ENCODE measurements at regions of chrX and their contacts with region 1.

Region 1: DNA sequence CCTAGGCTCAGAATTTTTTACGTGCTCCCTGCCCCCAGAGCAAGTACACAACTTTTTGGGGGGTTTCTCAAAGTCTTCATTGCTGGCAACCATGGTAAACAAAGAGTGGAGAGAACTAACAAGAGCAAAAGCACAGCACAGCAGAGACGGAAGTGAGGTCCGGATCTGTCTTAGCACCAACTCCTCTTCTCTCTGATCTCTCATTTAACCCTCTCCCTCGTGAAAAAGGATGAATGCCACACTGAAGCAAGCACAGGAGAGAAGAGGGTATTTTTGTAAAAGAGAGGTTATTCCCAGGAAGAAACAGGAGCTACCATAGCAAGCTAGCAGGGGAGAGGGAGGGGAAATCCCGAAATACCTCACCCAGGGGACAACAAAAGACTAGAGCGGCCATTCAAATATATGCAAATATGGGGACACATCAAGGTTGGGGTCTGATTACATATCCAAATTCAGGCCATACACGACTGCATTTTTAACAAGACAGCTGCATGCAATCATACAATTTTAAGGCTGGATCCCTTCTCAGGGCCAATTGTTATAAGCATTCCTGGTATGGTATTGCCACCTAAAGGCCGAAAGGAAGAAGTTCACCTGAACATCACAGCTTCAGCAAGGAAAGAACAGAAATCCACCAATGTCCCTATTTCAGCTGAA is 46.6 kb downstream of the CD40LG start:
- DNase-seq: peak; percentile 17
- ATAC-seq: peak; percentile 70
- H3K4me3 Mint-ChIP-seq: peak overlapping the region; percentile 60
- H3K27ac Mint-ChIP-seq: peak overlapping the region; percentile 94
- H3K4me1 Mint-ChIP-seq: peaks cover 73% of the 10 kb centered on the region
- H3K27me3 Mint-ChIP-seq: no peaks in the 10 kb centered on the region
- CTCF ChIP-seq: peak; percentile 76

Region 2: GRCh38 chrX:136496770-136497598 is 197.6 kb before region 1 on chrX and contains the start of gene HTATSF1:
- CTCF ChIA-PET with region 1: no interaction called
- POLR2A ChIA-PET with region 1: no interaction called
- intact Hi-C with region 1: loop called (anchors 10 kb)
- DNase-seq: peak; percentile 93
- ATAC-seq: peak; percentile 81
- H3K4me3 Mint-ChIP-seq: peak within 1 kb of the TSS; percentile 95
- H3K27ac Mint-ChIP-seq: peak within 1 kb of the TSS; percentile 95
- H3K4me1 Mint-ChIP-seq: peaks cover 10% of the 10 kb centered on the region
- H3K27me3 Mint-ChIP-seq: no peaks in the 10 kb centered on the region
- CTCF ChIP-seq: no peak
- total RNA-seq, gene HTATSF1: 33.0 to 35.4 TPM

Region 3: GRCh38 chrX:136577552-136577951 is 117.0 kb before region 1 on chrX:
- CTCF ChIA-PET with region 1: interaction called, 60 read pairs
- POLR2A ChIA-PET with region 1: no interaction called
- intact Hi-C with region 1: no loop called
- DNase-seq: peak; percentile 83
- ATAC-seq: peak; percentile 98
- H3K4me3 Mint-ChIP-seq: no peak overlapping the region
- H3K27ac Mint-ChIP-seq: peak overlapping the region; percentile 44
- H3K4me1 Mint-ChIP-seq: peaks cover 32% of the 10 kb centered on the region
- H3K27me3 Mint-ChIP-seq: no peaks in the 10 kb centered on the region
- CTCF ChIP-seq: peak; percentile 57

Region 4: DNA sequence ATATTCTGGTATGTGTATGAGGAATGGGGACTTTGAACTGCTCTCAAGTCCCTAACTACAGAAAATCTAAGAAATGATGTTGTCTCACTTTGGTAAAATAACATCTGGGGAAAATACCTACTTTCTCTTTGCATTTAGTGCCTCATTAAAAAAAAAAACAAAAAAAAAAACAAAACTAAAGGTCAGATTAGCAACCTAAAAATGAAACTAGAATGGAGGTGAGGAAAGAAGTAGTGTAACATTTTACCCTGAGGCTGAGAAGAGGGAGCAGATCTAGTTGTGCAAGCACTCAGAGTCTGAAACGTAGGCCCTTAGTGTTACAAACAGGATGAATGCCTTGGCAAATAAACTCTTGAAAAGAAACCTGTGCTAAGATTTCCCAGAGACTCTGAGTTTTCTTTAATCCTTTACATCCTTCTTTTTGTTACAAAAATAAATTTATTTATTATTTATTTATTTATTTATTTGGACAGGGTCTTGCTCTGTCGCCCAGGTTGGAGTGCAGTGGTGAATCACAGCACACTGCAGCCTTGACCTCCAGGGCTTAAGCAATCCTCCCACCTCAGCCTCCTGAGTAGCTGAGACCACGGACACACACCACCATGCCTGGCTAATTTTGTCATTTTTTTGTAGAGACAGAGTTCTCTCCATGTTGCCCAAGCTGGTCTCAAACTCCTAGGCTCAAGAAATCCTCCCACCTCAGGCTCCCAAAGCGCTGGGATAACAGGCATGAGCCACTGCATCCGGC is 106.3 kb before region 1 on chrX:
- CTCF ChIA-PET with region 1: interaction called, 6 read pairs
- POLR2A ChIA-PET with region 1: no interaction called
- intact Hi-C with region 1: loop called (anchors 5 kb)
- DNase-seq: no peak
- ATAC-seq: peak; percentile 69
- H3K4me3 Mint-ChIP-seq: peak overlapping the region; percentile 32
- H3K27ac Mint-ChIP-seq: peak overlapping the region; percentile 84
- H3K4me1 Mint-ChIP-seq: peaks cover 60% of the 10 kb centered on the region
- H3K27me3 Mint-ChIP-seq: no peaks in the 10 kb centered on the region
- CTCF ChIP-seq: no peak

Region 5: DNA sequence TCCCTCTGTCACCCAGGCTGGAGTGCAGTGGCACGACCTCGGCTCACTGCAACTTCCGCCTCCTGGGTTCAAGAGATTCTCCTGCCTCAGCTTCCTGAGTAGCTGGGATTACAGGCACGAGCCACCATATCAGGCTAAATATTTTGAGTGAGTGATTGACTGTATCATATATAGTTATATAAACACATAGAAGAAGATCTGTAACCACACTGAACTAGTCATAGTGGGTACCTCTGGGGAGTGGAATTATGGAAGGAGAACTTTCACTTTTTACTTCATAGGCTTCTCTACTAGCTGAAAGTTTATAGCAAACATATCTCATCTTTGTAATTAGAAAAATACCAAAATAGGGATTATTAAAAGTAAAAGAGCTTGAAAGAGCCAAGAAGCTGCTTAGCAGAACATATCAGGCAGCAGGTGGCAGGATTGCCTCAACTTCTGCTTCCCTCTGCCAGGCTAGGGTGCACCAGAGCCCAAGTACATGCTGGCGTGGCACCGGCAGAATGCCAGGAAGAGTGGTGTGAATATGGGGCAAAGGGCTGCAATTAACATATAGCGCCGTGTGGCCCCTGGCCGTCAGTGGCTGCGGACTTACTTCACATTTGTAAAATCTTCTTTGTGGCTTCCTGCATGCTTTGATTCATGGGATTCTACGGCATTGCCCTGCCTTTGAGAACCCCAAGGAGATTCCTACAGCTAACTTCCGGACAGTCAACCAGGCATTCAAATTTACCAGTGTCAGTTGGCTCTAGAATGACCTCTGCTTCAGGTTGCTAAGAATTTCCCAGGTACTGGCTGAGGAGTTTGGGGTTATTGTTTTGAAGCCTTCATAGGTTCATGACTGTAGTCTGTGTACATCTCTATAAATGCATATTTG is 86.0 kb before region 1 on chrX:
- CTCF ChIA-PET with region 1: interaction called, 61 read pairs
- POLR2A ChIA-PET with region 1: interaction called, 3 read pairs
- intact Hi-C with region 1: no loop called
- DNase-seq: peak; percentile 66
- ATAC-seq: peak; percentile 74
- H3K4me3 Mint-ChIP-seq: no peak overlapping the region
- H3K27ac Mint-ChIP-seq: peak overlapping the region; percentile 20
- H3K4me1 Mint-ChIP-seq: peaks cover 35% of the 10 kb centered on the region
- H3K27me3 Mint-ChIP-seq: no peaks in the 10 kb centered on the region
- CTCF ChIP-seq: peak; percentile 40

Region 6: GRCh38 chrX:136711147-136711546 is 16.6 kb after region 1 on chrX:
- CTCF ChIA-PET with region 1: interaction called, 11 read pairs
- POLR2A ChIA-PET with region 1: interaction called, 3 read pairs
- intact Hi-C with region 1: no loop called
- DNase-seq: peak; percentile 41
- ATAC-seq: peak; percentile 32
- H3K4me3 Mint-ChIP-seq: no peak overlapping the region
- H3K27ac Mint-ChIP-seq: peak overlapping the region; percentile 91
- H3K4me1 Mint-ChIP-seq: peaks cover 61% of the 10 kb centered on the region
- H3K27me3 Mint-ChIP-seq: no peaks in the 10 kb centered on the region
- CTCF ChIP-seq: no peak

Region 7: GRCh38 chrX:136931661-136932060 is 237.1 kb after region 1 on chrX:
- CTCF ChIA-PET with region 1: no interaction called
- POLR2A ChIA-PET with region 1: no interaction called
- intact Hi-C with region 1: no loop called
- DNase-seq: no peak
- ATAC-seq: no peak
- H3K4me3 Mint-ChIP-seq: no peak overlapping the region
- H3K27ac Mint-ChIP-seq: no peak overlapping the region
- H3K4me1 Mint-ChIP-seq: peaks cover 11% of the 10 kb centered on the region
- H3K27me3 Mint-ChIP-seq: no peaks in the 10 kb centered on the region
- CTCF ChIP-seq: no peak